Right cardiac atrium (tissue), 5 donors: ENCODE measurements at regions of chr4 and their contacts with region 1.

Region 1: GRCh38 chr4:122602277-122603142 is 18.4 kb downstream of the IL21 start:
- DNase-seq: no peak
- ATAC-seq: peak; percentile 47 to 49
- H3K4me3 ChIP-seq: no peak overlapping the region
- H3K27ac ChIP-seq: no peak overlapping the region
- H3K4me1 ChIP-seq: no peaks in the 10 kb centered on the region
- H3K27me3 ChIP-seq: no peaks in the 10 kb centered on the region

Region 2: DNA sequence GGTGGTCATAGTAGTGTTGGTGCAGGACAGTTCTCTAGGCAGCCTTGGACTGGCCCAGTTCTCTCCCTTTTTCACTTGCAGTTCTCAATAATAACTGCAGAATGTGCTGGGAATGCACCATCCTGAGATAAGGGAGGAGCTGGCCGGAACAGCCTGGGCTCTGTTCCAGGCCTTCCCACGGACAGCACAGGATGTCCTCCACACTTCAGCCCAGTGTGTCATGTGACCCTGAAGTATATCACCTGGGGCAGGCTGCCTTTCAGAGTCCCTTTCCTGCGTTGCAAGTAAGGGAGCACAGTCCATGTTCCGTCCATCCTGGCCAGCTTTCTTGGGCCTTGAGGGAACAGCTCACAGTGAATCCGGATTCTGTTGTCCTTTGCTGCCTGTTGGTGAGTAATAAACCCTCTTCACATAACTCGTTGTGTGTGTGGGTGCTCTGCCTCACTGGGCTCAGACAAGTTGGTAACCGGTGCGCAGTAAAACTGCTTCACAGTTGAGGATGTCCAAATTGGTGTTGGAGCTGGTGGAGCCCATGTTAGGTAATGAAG is 97.7 kb after region 1 on chr4:
- intact Hi-C with region 1: loop called in 1 of 4 experiments (anchors 10 kb)
- DNase-seq: peak; percentile 60 to 90 (median 85)
- ATAC-seq: peak; percentile 96 to 98
- H3K4me3 ChIP-seq: peak overlapping the region; percentile 76
- H3K27ac ChIP-seq: peak overlapping the region; percentile 82
- H3K4me1 ChIP-seq: no peaks in the 10 kb centered on the region
- H3K27me3 ChIP-seq: no peaks in the 10 kb centered on the region

Region 3: DNA sequence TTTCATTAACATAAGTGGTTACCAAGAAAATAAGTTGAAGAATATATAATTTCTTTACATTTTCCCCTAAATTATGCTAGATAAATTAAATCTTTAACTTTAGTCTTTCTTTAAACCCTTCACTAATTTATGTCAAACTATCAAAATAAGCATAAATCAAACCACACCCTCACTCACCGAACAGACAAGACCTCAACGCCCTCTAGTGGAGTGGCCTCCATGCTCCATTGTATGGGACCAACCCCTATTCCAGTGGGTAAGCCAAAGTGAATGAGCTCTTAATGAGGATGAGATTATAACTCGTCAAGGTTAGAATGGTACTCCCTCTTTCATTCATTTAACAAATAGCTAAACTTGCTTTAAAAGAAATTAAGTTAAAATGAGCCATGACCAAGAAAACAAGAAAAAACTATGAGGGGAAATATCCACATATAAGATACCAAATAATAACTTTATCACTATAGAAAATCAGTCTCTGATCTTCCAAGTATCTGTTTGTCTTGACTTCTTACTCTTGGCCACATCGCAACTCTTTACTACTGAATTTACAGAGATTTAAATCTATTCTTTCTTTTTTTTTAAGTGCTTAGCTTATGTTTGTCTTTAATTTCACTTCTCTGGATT is 114.4 kb after region 1 on chr4:
- intact Hi-C with region 1: loop called in 2 of 4 experiments (anchors 5 to 10 kb)
- DNase-seq: peak; percentile 69 to 89 (median 74)
- ATAC-seq: peak; percentile 81 to 87
- H3K4me3 ChIP-seq: no peak overlapping the region
- H3K27ac ChIP-seq: no peak overlapping the region
- H3K4me1 ChIP-seq: no peaks in the 10 kb centered on the region
- H3K27me3 ChIP-seq: no peaks in the 10 kb centered on the region

Region 4: DNA sequence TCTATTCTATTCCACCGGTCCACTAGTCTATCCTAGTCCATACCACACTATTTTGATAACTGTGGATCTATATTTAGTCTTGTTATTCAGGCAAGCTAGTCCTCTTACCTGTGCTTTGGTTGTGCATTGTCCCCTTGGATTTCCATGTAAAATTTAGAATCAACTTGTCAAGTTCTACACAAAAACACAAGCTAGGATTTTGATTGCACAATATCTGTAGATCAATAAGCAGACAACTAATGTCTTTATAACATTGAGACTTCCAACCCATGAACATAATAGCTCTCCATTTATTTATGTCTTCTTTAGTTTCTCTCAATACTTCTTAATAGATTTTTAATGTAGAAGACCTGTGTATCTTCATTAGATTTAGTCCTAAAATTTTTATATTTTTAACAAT is 119.7 kb after region 1 on chr4:
- intact Hi-C with region 1: loop called in 2 of 4 experiments (anchors 5 to 10 kb)
- DNase-seq: no peak
- ATAC-seq: no peak
- H3K4me3 ChIP-seq: no peak overlapping the region
- H3K27ac ChIP-seq: no peak overlapping the region
- H3K4me1 ChIP-seq: no peaks in the 10 kb centered on the region
- H3K27me3 ChIP-seq: no peaks in the 10 kb centered on the region

Region 5: DNA sequence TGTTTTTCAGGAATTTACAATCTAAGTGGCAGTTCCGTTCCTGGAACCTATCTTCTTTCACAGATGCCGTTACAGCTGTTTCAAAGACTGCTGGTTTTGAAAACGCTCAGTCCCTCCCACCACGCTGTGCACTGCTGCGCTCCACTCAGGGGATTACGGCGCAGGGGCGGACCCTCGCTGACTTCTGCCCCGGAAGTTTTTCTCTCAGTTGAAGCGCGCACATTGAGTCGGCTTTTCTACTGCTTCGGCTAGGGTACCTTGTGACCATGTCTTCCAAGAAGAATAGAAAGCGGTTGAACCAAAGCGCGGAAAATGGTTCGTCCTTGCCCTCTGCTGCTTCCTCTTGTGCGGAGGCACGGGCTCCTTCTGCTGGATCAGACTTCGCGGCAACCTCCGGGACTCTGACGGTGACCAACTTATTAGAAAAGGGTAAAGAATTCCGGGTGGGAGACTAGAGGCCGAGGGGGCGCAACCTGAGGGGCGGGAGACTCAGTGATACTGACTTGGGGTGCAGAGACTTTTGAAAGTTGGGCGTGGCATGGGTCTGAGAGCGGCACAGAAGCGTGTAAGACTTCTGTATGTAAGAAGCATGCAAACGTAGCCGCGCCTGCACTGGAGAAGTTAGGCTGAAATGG is 320.5 kb after region 1 on chr4:
- intact Hi-C with region 1: loop called in 3 of 4 experiments (anchors 10 kb)
- DNase-seq: peak; percentile 85 to 92 (median 92)
- ATAC-seq: peak; percentile 99
- H3K4me3 ChIP-seq: peak overlapping the region; percentile 98
- H3K27ac ChIP-seq: peak overlapping the region; percentile 87
- H3K4me1 ChIP-seq: peaks cover 2% of the 10 kb centered on the region
- H3K27me3 ChIP-seq: no peaks in the 10 kb centered on the region